IMR-90 (cell line): ENCODE measurements at regions of chr4 and their contacts with region 1.

Region 1: GRCh38 chr4:88823058-88823919 is 125.7 kb upstream of the NAP1L5 start:
- DNase-seq: peak; percentile 98
- ATAC-seq: peak; percentile 96
- H3K4me3 ChIP-seq: peak overlapping the region; percentile 58
- H3K27ac ChIP-seq: peak overlapping the region; percentile 77
- H3K4me1 ChIP-seq: peaks cover 2% of the 10 kb centered on the region
- H3K27me3 ChIP-seq: no peaks in the 10 kb centered on the region
- CTCF ChIP-seq: no peak
- POLR2A ChIP-seq: peak; percentile 79
- RAD21 ChIP-seq: no peak

Region 2: GRCh38 chr4:88523325-88524129 is 299.8 kb before region 1 on chr4 and contains the start of gene PYURF:
- CTCF ChIA-PET with region 1: no interaction called
- POLR2A ChIA-PET with region 1: no interaction called
- dilution Hi-C with region 1: no loop called
- in situ Hi-C with region 1: loop called (anchors 25 kb)
- intact Hi-C with region 1: no loop called
- DNase-seq: peak; percentile 91
- ATAC-seq: peak; percentile 97
- H3K4me3 ChIP-seq: peak within 1 kb of the TSS; percentile 89
- H3K27ac ChIP-seq: peak within 1 kb of the TSS; percentile 90
- H3K4me1 ChIP-seq: peaks cover 3% of the 10 kb centered on the region
- H3K27me3 ChIP-seq: no peaks in the 10 kb centered on the region
- CTCF ChIP-seq: 0 out of 2 replicates have a peak, but pooled peaks have one; percentile 0
- POLR2A ChIP-seq: peak; percentile 76
- RAD21 ChIP-seq: no peak
- total RNA-seq, gene PYURF: 43.4 and 61.7 TPM in 2 replicates

Region 3: DNA sequence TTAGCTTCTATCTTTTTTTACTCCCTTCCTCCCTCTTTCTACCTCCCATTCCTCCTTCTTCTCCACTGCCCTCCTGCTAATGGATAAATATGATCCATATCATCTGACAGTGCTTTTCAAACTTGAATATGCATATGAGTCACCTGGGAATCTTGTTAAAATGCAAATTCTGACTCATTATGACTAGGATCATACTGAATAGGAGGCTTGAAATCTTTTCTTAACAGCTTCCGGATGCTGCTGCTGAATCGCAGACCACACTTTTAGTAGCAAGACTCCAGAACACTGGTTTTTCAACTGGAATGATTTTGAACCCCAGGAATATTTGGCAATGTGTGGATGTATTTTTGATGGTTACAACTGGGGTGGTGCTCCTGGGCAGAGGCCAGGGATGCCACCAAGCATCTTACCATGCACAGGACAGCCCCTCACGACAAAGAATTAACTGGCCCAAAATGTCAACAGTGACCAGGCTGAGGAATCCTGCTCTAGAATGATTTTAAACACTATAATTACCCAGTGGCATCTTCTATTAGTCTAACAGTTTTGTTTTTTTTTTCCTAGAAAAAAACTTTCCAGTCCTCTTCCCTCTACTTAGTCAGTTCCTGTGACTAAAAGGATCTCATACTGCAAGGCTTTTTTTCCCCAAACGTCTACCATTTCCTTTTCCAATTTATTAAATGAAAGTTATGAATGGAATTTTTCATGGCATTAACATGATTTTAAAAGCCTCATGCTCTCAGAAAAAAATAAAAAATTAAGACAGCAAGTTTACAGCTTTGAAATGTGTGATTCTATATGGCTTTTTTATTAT is 289.1 kb before region 1 on chr4:
- CTCF ChIA-PET with region 1: no interaction called
- POLR2A ChIA-PET with region 1: no interaction called
- dilution Hi-C with region 1: no loop called
- in situ Hi-C with region 1: loop called (anchors 25 kb)
- intact Hi-C with region 1: loop called (anchors 5 kb)
- DNase-seq: peak; percentile 94
- ATAC-seq: peak; percentile 76
- H3K4me3 ChIP-seq: no peak overlapping the region
- H3K27ac ChIP-seq: peak overlapping the region; percentile 96
- H3K4me1 ChIP-seq: peaks cover 4% of the 10 kb centered on the region
- H3K27me3 ChIP-seq: no peaks in the 10 kb centered on the region
- CTCF ChIP-seq: no peak
- POLR2A ChIP-seq: peak; percentile 56; the same call in 1 of the 2 replicates
- RAD21 ChIP-seq: no peak

Region 4: GRCh38 chr4:88706574-88706973 is 116.7 kb before region 1 on chr4:
- CTCF ChIA-PET with region 1: interaction called, 16 read pairs
- POLR2A ChIA-PET with region 1: no interaction called
- dilution Hi-C with region 1: no loop called
- in situ Hi-C with region 1: no loop called
- intact Hi-C with region 1: loop called (anchors 1 kb)
- DNase-seq: peak; percentile 77
- ATAC-seq: peak; percentile 76
- H3K4me3 ChIP-seq: no peak overlapping the region
- H3K27ac ChIP-seq: 0 out of 2 replicates have a peak overlapping the region, but pooled peaks have one; percentile 26
- H3K4me1 ChIP-seq: peaks cover 10% of the 10 kb centered on the region
- H3K27me3 ChIP-seq: no peaks in the 10 kb centered on the region
- CTCF ChIP-seq: peak; percentile 74
- POLR2A ChIP-seq: no peak
- RAD21 ChIP-seq: peak; percentile 88

Region 5: GRCh38 chr4:88802138-88802537 is 21.2 kb before region 1 on chr4:
- CTCF ChIA-PET with region 1: no interaction called
- POLR2A ChIA-PET with region 1: no interaction called
- dilution Hi-C with region 1: no loop called
- in situ Hi-C with region 1: no loop called
- intact Hi-C with region 1: no loop called
- DNase-seq: no peak
- ATAC-seq: no peak
- H3K4me3 ChIP-seq: no peak overlapping the region
- H3K27ac ChIP-seq: no peak overlapping the region
- H3K4me1 ChIP-seq: peaks cover 2% of the 10 kb centered on the region
- H3K27me3 ChIP-seq: no peaks in the 10 kb centered on the region
- CTCF ChIP-seq: no peak
- POLR2A ChIP-seq: no peak
- RAD21 ChIP-seq: no peak

Region 6: DNA sequence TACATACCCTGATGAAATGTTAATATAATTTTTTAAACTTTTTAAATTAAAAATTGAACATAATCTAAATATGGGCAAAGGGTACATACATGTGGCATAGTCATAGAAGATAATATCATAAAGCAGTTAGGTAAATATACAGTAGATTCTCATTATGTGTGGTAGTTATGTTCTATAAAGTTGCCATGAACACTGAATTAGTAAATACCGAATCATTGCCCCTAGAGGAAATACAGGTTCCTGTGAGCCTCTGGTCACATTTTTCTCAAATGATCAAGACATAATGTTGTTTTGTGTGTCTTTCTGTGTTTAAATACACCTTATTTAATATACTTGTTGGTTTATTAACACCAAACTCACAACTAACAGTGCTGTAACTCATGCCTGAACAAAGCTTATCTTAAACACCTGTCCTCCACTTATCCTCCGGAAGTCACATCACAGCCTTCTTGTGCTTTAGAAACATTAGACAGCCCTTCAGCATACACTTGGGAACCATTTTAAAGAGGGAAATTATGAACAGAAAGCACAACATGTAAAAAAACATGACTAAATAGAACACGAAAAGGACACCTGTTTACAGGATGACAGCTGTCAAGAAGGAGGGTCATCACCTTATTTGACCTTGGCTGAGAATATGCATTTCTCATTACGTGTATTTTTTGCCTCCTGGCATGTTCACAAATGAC is 43.7 kb after region 1 on chr4:
- CTCF ChIA-PET with region 1: interaction called, 3 read pairs
- POLR2A ChIA-PET with region 1: no interaction called
- dilution Hi-C with region 1: no loop called
- in situ Hi-C with region 1: no loop called
- intact Hi-C with region 1: loop called (anchors 5 kb)
- DNase-seq: peak; percentile 61
- ATAC-seq: no peak
- H3K4me3 ChIP-seq: no peak overlapping the region
- H3K27ac ChIP-seq: no peak overlapping the region
- H3K4me1 ChIP-seq: peaks cover 3% of the 10 kb centered on the region; the same call in 1 of the 2 replicates
- H3K27me3 ChIP-seq: no peaks in the 10 kb centered on the region
- CTCF ChIP-seq: no peak
- POLR2A ChIP-seq: no peak
- RAD21 ChIP-seq: no peak

Region 7: DNA sequence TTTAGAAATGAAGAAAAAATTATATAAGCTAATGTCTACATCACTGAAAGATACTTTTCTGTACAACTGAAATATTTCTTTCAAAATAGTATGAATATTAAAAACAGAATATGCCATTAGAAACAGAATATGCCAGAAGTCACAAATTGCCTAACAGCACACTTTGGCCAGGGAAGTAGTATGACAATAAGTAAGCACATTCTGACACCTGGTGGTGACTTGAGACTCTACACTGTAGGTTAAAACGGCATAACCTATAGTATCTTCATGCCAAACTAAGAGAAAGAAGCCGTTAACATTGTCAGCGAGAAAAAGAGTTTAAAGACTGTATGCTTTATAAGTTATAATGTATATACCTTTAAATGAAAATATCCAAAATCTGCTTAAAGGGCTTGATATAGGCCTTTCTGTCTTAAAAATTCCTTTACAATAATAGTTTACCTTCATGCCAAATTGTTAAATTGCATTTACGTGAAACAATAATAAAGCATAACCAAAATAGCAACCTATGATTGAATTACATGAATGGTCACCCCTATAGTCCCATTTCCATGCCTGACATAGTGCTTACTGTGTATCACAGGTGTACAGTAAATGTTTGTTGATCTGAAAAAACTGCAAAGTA is 200.9 kb after region 1 on chr4:
- CTCF ChIA-PET with region 1: interaction called, 47 read pairs
- POLR2A ChIA-PET with region 1: no interaction called
- dilution Hi-C with region 1: no loop called
- in situ Hi-C with region 1: loop called (anchors 5 kb)
- intact Hi-C with region 1: loop called (anchors 1 kb)
- DNase-seq: peak; percentile 81
- ATAC-seq: peak; percentile 95
- H3K4me3 ChIP-seq: no peak overlapping the region
- H3K27ac ChIP-seq: no peak overlapping the region
- H3K4me1 ChIP-seq: no peaks in the 10 kb centered on the region
- H3K27me3 ChIP-seq: no peaks in the 10 kb centered on the region
- CTCF ChIP-seq: peak; percentile 89
- POLR2A ChIP-seq: peak; percentile 49; the same call in 1 of the 2 replicates
- RAD21 ChIP-seq: peak; percentile 98

Region 8: GRCh38 chr4:89110986-89111832 is 287.9 kb after region 1 on chr4 and contains the start of gene TIGD2:
- CTCF ChIA-PET with region 1: no interaction called
- POLR2A ChIA-PET with region 1: no interaction called
- dilution Hi-C with region 1: no loop called
- in situ Hi-C with region 1: no loop called
- intact Hi-C with region 1: loop called (anchors 1 kb)
- DNase-seq: peak; percentile 81
- ATAC-seq: peak; percentile 96
- H3K4me3 ChIP-seq: peak within 1 kb of the TSS; percentile 94
- H3K27ac ChIP-seq: peak within 1 kb of the TSS; percentile 89
- H3K4me1 ChIP-seq: 0 out of 2 replicates have a peak, but pooled peaks cover 2% of the 10 kb centered on the region
- H3K27me3 ChIP-seq: peaks cover 24% of the 10 kb centered on the region
- CTCF ChIP-seq: peak; percentile 69
- POLR2A ChIP-seq: no peak
- RAD21 ChIP-seq: peak; percentile 51
- total RNA-seq, gene TIGD2: 12.4 and 16.4 TPM in 2 replicates